WTC11 (cell line): ENCODE measurements at regions of chr1 and their contacts with region 1.

Region 1: DNA sequence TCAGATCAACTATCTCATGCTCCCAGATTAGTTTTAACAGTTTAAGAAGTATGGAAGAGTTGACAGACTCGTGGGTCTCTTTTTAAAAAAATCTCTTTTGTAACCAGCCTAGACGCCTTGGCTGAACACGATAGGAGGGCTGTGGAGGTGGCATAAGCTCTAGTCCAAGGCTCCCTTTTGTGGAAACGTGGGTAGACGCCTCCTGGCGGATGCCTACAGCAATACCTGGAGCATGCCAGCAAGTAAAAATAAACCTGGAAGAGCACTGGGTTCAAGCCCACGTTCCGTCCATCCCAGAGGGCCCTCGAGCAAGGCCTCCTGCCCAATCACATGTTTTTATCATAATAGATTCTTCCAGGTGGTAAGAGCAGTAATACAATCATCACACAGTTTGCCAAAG is 87.9 kb downstream of the RGS7 start:
- DNase-seq: peak; percentile 47
- ATAC-seq: peak; percentile 84
- H3K4me3 Mint-ChIP-seq: no peak overlapping the region
- H3K27ac Mint-ChIP-seq: no peak overlapping the region
- H3K4me1 Mint-ChIP-seq: peaks cover 8% of the 10 kb centered on the region
- H3K27me3 Mint-ChIP-seq: no peaks in the 10 kb centered on the region
- CTCF ChIP-seq: peak; percentile 45

Region 2: GRCh38 chr1:240967070-240967724 is 301.9 kb before region 1 on chr1:
- CTCF ChIA-PET with region 1: interaction called, 19 read pairs
- POLR2A ChIA-PET with region 1: no interaction called
- DNase-seq: no peak
- ATAC-seq: peak; percentile 81
- H3K4me3 Mint-ChIP-seq: no peak overlapping the region
- H3K27ac Mint-ChIP-seq: no peak overlapping the region
- H3K4me1 Mint-ChIP-seq: peaks cover 27% of the 10 kb centered on the region
- H3K27me3 Mint-ChIP-seq: no peaks in the 10 kb centered on the region
- CTCF ChIP-seq: 0 out of 2 replicates have a peak, but pooled peaks have one; percentile 16

Region 3: GRCh38 chr1:241286486-241286885 is 17.4 kb after region 1 on chr1:
- CTCF ChIA-PET with region 1: no interaction called
- POLR2A ChIA-PET with region 1: no interaction called
- DNase-seq: no peak
- ATAC-seq: no peak
- H3K4me3 Mint-ChIP-seq: no peak overlapping the region
- H3K27ac Mint-ChIP-seq: no peak overlapping the region
- H3K4me1 Mint-ChIP-seq: no peaks in the 10 kb centered on the region
- H3K27me3 Mint-ChIP-seq: no peaks in the 10 kb centered on the region
- CTCF ChIP-seq: no peak